ENCODE measurements at regions of chrX and their contacts with region 1.

Region 1: DNA sequence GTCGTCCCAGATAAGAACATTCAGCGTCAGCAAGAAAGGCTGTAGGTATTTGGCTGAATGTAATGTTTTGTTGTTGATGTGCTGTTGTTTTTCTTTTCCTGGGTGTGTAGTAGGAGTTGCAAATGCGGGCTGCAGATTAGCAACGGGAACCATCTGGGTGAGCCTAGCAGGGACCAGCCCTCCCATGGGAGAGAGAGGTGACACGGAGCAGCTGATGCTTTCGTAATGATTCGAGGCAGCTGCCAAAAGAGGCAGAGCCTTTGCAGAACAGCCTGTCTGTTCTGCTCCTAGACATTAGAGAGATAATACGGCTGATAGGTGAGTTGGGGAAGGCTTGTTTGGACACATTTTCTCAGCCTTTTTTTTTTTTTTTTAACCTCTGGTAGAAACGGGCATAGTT is 25.3 kb downstream of the ARSF start:
- DNase-seq: no peak
- H3K4me3 ChIP-seq: no peak overlapping the region
- H3K27me3 ChIP-seq: peaks cover 1% of the 10 kb centered on the region; the same call in 1 of the 2 replicates
- CTCF ChIP-seq: no peak

Region 2: GRCh38 chrX:3599802-3600430 is 533.4 kb after region 1 on chrX:
- CTCF ChIA-PET with region 1: no interaction called
- POLR2A ChIA-PET with region 1: interaction called, 13 read pairs
- DNase-seq: no peak
- H3K4me3 ChIP-seq: no peak overlapping the region
- H3K27me3 ChIP-seq: no peaks in the 10 kb centered on the region
- CTCF ChIP-seq: no peak